Naive thymus-derived CD8-positive, alpha-beta T cell (primary cell): ENCODE measurements at regions of chr6 and their contacts with region 1.

Region 1: DNA sequence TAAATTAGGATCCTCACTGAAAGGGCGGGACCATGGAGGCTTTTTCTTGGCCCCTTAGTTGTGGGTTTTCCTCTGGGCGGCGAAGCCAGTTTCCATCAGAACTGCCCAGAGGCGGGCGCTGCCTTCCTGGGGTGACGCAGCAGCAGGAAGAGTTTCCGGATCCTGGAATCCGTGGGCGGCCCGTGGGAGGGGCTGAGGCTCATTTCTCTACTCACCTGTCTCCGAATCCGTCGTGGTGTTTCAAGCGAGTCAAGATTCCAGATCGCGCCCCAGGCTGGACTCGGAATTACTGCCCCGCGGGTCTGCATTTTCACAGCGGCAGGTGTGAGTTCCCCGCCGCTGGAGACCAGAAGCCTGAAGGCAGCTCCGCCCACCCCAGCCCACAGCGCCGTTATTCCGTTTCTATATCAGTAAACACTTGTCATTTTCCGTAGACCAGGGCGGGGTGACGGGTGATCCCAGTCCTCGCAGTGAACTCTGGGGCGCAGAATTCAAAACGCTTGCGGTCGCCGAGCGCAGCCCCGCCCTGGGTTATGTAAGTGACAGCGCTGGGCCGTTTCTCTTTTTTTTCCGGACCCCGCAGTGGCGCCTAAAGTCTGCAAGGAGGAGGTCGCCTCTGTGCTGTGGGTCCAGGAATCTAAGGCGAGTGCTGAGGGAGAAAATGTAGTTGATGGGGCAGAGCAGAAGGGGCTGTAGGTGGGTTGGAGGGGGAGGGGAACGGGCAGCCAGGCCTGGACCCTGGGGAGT is 27.2 kb upstream of the POU5F1 start:
- DNase-seq: peak; percentile 82 to 98 (median 95)
- ATAC-seq: peak; percentile 80
- H3K4me3 Mint-ChIP-seq: peak overlapping the region; percentile 84 to 99 (median 90)
- H3K27ac Mint-ChIP-seq: peak overlapping the region; percentile 89 to 100 (median 97)
- H3K4me1 Mint-ChIP-seq: peaks cover 17 to 69% (median 63%) of the 10 kb centered on the region in 4 donors
- H3K27me3 Mint-ChIP-seq: no peaks in the 10 kb centered on the region

Region 2: GRCh38 chr6:29251741-29252140 is 1946.0 kb before region 1 on chr6:
- POLR2A ChIA-PET with region 1: no interaction called
- DNase-seq: no peak
- ATAC-seq: no peak
- H3K4me3 Mint-ChIP-seq: no peak overlapping the region
- H3K27ac Mint-ChIP-seq: no peak overlapping the region
- H3K4me1 Mint-ChIP-seq: no peaks in the 10 kb centered on the region
- H3K27me3 Mint-ChIP-seq: peaks cover 34 to 63% (median 54%) of the 10 kb centered on the region in 5 donors

Region 3: GRCh38 chr6:31103136-31103535 is 94.6 kb before region 1 on chr6:
- POLR2A ChIA-PET with region 1: no interaction called
- DNase-seq: no peak
- ATAC-seq: no peak
- H3K4me3 Mint-ChIP-seq: no peak overlapping the region
- H3K27ac Mint-ChIP-seq: peak overlapping the region in 1 of 10 donors; percentile 60
- H3K4me1 Mint-ChIP-seq: peaks cover 3 to 6% (median 4%) of the 10 kb centered on the region in 4 donors
- H3K27me3 Mint-ChIP-seq: no peaks in the 10 kb centered on the region

Region 4: DNA sequence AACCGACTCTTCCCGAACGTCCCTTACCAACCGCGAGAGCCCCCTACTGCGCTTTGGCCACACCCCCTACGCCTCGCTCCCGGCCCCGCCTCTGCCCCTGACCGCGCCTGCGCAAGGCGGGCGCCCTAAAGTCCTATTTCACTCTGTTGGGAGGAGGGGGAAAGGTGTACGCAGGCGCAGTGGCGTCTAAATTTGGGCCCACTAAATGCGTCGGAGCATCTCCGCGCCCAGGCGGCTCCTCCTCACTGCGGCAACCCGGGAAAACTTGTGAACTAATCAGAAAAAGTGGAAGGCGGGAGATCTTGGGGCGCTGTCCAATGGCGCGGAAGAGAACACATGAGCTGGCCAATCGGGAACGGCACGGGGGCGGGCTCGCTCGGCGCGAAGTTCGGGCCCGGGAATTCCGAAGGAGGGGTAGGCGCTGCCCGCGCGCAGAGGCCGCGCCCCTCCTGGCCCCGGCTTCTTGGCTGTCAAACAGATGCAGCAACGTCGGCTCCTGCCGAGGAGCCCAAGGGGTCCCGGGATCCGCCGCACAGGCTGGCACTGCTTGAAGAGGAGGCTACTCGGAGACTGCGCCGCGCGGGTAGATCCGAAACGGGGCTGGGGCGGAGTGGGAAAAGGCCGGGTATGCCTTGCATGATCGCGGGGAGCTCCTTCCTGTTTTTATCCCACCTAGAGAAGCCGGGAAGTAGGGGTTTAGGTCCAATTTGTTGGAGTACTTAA is 39.4 kb before region 1 on chr6 and contains the start of gene TCF19:
- POLR2A ChIA-PET with region 1: interaction called, 12 read pairs
- DNase-seq: peak; percentile 95 to 100 (median 99)
- ATAC-seq: peak; percentile 94 to 95
- H3K4me3 Mint-ChIP-seq: peak within 1 kb of the TSS; percentile 83 to 100 (median 93)
- H3K27ac Mint-ChIP-seq: peak within 1 kb of the TSS; percentile 60 to 96 (median 88)
- H3K4me1 Mint-ChIP-seq: peaks cover 15 to 31% (median 24%) of the 10 kb centered on the region in 4 donors
- H3K27me3 Mint-ChIP-seq: no peaks in the 10 kb centered on the region
- polyA plus RNA-seq, gene TCF19: 5.6 to 9.7 (median 8.4) TPM

Region 5: DNA sequence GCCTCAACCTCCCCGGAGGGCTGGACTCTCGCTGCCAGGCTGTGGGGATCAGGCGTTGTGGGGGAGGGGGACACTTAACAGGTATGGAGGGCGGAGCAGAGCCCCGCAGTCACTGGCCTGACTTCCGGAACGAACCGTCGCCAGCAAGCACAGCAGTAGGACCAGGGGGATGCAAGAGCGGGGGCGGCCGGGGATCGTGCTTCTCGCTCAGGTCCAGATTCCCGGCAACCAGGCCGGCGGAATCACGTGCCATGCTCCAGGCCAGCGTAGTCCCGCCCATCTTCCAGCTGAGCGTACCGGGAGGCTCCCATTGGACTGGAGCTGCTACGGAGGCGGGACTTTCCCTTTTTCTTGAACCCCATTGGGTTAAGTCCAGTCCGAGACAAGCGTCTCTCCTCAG is 17.2 kb before region 1 on chr6:
- POLR2A ChIA-PET with region 1: no interaction called
- DNase-seq: peak; percentile 58 to 83 (median 64)
- ATAC-seq: peak; percentile 99
- H3K4me3 Mint-ChIP-seq: peak overlapping the region; percentile 77 to 91 (median 88)
- H3K27ac Mint-ChIP-seq: peak overlapping the region; percentile 31 to 90 (median 82)
- H3K4me1 Mint-ChIP-seq: peaks cover 2 to 27% (median 19%) of the 10 kb centered on the region in 4 donors
- H3K27me3 Mint-ChIP-seq: no peaks in the 10 kb centered on the region

Region 6: GRCh38 chr6:31271641-31272357 is 74.1 kb after region 1 on chr6 and contains the start of gene HLA-C:
- POLR2A ChIA-PET with region 1: interaction called, 54 read pairs
- DNase-seq: peak; percentile 78 to 98 (median 93)
- ATAC-seq: peak; percentile 83 to 86
- H3K4me3 Mint-ChIP-seq: peak within 1 kb of the TSS; percentile 92 to 99 (median 96)
- H3K27ac Mint-ChIP-seq: peak within 1 kb of the TSS; percentile 98 to 100 (median 100)
- H3K4me1 Mint-ChIP-seq: peaks cover 33 to 78% (median 59%) of the 10 kb centered on the region in 4 donors
- H3K27me3 Mint-ChIP-seq: no peaks in the 10 kb centered on the region
- polyA plus RNA-seq, gene HLA-C: 2,582 to 3,026 (median 3,019) TPM

Region 7: GRCh38 chr6:31356946-31357466 is 159.3 kb after region 1 on chr6 and contains the start of gene HLA-B:
- POLR2A ChIA-PET with region 1: interaction called, 49 read pairs
- DNase-seq: peak; percentile 73 to 97 (median 86)
- ATAC-seq: peak; percentile 78 to 84
- H3K4me3 Mint-ChIP-seq: peak within 1 kb of the TSS; percentile 97 to 100 (median 99)
- H3K27ac Mint-ChIP-seq: peak within 1 kb of the TSS; percentile 100
- H3K4me1 Mint-ChIP-seq: peaks cover 46 to 66% (median 58%) of the 10 kb centered on the region in 4 donors
- H3K27me3 Mint-ChIP-seq: peaks cover 0 to 3% (median 0%) of the 10 kb centered on the region in 5 donors
- polyA plus RNA-seq, gene HLA-B: 5,978 to 8,548 (median 7,722) TPM

Region 8: GRCh38 chr6:31399589-31400466 is 202.1 kb after region 1 on chr6:
- POLR2A ChIA-PET with region 1: interaction called, 11 read pairs
- DNase-seq: peak in 9 of 10 donors; percentile 16 to 70 (median 52)
- ATAC-seq: peak; percentile 19 to 29
- H3K4me3 Mint-ChIP-seq: peak overlapping the region; percentile 85 to 98 (median 94)
- H3K27ac Mint-ChIP-seq: peak overlapping the region; percentile 81 to 98 (median 96)
- H3K4me1 Mint-ChIP-seq: peaks cover 33 to 74% (median 67%) of the 10 kb centered on the region in 4 donors
- H3K27me3 Mint-ChIP-seq: no peaks in the 10 kb centered on the region